Caco-2 (cell line): ENCODE measurements at regions of chr17 and their contacts with region 1.

Region 1: GRCh38 chr17:28540231-28540630 is 12.2 kb downstream of the UNC119 start:
- DNase-seq: no peak
- H3K4me3 ChIP-seq: no peak overlapping the region
- H3K4me3 Mint-ChIP-seq: no peak overlapping the region
- H3K27ac Mint-ChIP-seq: no peak overlapping the region
- H3K4me1 ChIP-seq: 0 out of 2 replicates have a peak, but pooled peaks cover 6% of the 10 kb centered on the region
- H3K4me1 Mint-ChIP-seq: peaks cover 7% of the 10 kb centered on the region
- H3K27me3 ChIP-seq: no peaks in the 10 kb centered on the region
- H3K27me3 Mint-ChIP-seq: no peaks in the 10 kb centered on the region
- CTCF ChIP-seq: no peak

Region 2: DNA sequence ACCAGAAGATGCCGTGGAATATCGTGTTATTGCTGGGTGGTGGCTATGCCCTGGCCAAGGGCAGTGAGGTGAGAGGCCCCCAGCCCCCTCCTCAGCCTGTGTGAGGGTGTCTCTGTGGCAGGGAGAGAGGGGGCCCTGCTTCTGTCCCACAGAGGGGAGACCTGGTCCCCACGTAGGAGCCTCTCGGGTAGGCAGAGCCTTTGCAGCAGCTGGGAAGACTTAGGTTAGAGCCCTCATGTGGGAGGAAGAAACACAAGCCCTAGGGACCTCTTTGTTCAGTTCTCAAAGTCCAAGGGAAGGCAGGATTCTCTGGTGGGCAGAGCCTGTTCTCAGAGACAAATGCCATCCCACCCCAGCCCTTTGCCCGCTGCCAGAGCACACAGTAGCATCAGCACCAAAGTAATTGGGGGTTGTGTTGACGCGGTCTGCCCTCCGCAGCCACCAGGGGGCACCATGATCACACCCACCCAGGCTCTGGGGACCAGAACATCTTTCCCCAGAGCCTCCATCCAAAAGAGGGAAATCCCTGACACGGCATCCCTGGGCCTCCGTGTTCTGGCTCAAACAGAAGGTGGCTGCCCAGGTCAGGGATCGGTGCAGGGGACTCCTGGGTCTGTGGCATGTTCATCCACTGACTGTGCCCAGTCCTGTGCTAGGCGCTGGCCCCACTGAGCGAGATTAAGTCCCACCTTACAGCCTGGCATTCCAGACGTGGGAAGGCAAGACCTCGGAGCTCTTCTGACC is 45.6 kb before region 1 on chr17:
- CTCF ChIA-PET with region 1: interaction called, 4 read pairs
- POLR2A ChIA-PET with region 1: interaction called, 3 read pairs
- intact Hi-C with region 1: loop called (anchors 1 kb)
- DNase-seq: peak; percentile 78 to 88
- H3K4me3 ChIP-seq: no peak overlapping the region
- H3K4me3 Mint-ChIP-seq: no peak overlapping the region
- H3K27ac Mint-ChIP-seq: no peak overlapping the region
- H3K4me1 ChIP-seq: peaks cover 6% of the 10 kb centered on the region; the same call in 1 of the 2 replicates
- H3K4me1 Mint-ChIP-seq: peaks cover 7% of the 10 kb centered on the region
- H3K27me3 ChIP-seq: no peaks in the 10 kb centered on the region
- H3K27me3 Mint-ChIP-seq: no peaks in the 10 kb centered on the region
- CTCF ChIP-seq: peak; percentile 92 to 97

Region 3: DNA sequence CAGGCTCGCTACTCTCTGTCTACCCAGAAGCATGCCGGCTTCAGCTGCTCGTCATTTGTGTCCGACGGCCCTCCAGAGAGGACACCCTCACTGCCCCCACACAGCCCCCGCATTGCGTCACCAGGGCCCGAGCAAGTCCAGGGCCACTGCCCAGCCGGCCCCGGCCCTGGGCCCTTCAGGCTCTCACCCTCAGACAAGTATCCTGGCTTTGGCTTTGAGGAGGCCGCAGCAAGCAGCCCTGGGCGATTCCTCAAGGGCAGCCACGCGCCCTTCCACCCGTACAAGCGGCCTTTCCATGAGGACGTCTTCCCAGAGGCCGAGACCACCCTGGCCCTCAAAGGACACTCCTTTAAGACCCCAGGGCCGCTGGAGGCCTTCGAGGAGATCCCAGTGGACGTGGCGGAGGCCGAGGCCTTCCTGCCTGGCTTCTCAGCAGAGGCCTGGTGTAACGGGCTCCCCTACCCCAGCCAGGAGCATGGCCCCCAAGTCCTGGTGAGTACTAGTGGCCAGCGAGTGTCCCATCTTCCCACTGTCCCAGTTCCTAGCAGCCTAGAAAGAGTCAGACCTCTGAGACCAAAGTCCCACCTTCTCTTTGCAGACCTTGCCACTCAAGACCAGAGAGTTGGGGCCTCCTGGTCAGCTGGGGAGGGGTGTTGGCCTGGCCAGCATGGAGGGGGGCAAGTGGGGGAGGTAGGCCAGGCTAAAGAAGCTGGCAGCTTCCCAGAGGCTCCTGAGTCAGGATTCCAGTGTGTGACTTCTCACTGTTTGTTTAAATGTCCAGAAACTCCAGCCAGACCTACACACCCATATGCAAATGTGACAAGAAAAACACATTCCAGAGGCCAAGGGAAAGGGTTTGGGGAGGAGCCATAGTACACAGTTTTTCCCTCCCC is 15.5 kb before region 1 on chr17:
- CTCF ChIA-PET with region 1: no interaction called
- POLR2A ChIA-PET with region 1: no interaction called
- intact Hi-C with region 1: loop called (anchors 1 kb)
- DNase-seq: peak; percentile 81 to 92
- H3K4me3 ChIP-seq: no peak overlapping the region
- H3K4me3 Mint-ChIP-seq: peak overlapping the region; percentile 39
- H3K27ac Mint-ChIP-seq: peak overlapping the region; percentile 97
- H3K4me1 ChIP-seq: peaks cover 37% of the 10 kb centered on the region
- H3K4me1 Mint-ChIP-seq: peaks cover 22% of the 10 kb centered on the region
- H3K27me3 ChIP-seq: no peaks in the 10 kb centered on the region
- H3K27me3 Mint-ChIP-seq: no peaks in the 10 kb centered on the region
- CTCF ChIP-seq: no peak

Region 4: GRCh38 chr17:28592260-28592659 is 52.0 kb after region 1 on chr17:
- CTCF ChIA-PET with region 1: no interaction called
- POLR2A ChIA-PET with region 1: no interaction called
- intact Hi-C with region 1: no loop called
- DNase-seq: peak in 1 of 2 experiments; percentile 11
- H3K4me3 ChIP-seq: no peak overlapping the region
- H3K4me3 Mint-ChIP-seq: no peak overlapping the region
- H3K27ac Mint-ChIP-seq: no peak overlapping the region
- H3K4me1 ChIP-seq: no peaks in the 10 kb centered on the region
- H3K4me1 Mint-ChIP-seq: peaks cover under 1% of the 10 kb centered on the region
- H3K27me3 ChIP-seq: no peaks in the 10 kb centered on the region
- H3K27me3 Mint-ChIP-seq: no peaks in the 10 kb centered on the region
- CTCF ChIP-seq: no peak